ENCODE measurements at regions of chr2 and their contacts with region 1.

Region 1: GRCh38 chr2:58856100-58856499 is 615.0 kb upstream of the FANCL start:
- DNase-seq: peak; percentile 39 to 42
- H3K4me3 ChIP-seq: no peak overlapping the region
- H3K4me3 Mint-ChIP-seq: peak overlapping the region; percentile 68
- H3K27ac Mint-ChIP-seq: peak overlapping the region; percentile 59
- H3K4me1 ChIP-seq: peaks cover 11% of the 10 kb centered on the region
- H3K4me1 Mint-ChIP-seq: peaks cover 14% of the 10 kb centered on the region
- H3K27me3 ChIP-seq: no peaks in the 10 kb centered on the region
- H3K27me3 Mint-ChIP-seq: no peaks in the 10 kb centered on the region
- CTCF ChIP-seq: no peak

Region 2: DNA sequence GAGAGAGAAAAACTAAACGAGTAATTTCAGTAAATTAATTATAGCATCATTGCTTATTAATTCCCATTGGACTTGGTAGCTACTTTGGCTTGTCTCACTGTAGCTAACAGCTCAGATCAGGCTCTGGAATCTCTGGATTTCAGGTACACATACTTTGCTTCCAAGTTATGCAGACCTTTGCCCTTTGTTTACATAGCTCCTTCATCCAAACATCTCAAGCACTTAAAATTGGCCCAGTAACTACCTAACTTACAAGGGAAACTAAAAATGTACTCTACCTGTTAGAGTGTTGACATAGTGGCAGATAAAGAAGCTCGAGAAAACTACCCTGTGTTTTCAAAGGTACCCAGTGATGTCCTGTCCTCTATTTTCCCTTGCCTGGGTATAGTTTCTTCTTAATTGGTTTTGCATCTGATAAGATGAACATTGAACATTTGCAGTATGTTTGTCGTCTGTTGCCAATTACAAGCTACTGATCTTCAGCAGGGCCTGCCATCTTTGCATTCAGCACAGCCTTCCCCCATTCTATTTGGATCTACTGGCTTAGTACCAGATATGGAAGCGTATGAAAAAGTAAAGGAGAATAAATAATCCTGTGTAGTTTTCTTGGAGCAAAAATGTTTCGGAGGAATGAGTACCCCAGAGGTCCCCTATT is 13.5 kb before region 1 on chr2:
- CTCF ChIA-PET with region 1: no interaction called
- POLR2A ChIA-PET with region 1: no interaction called
- intact Hi-C with region 1: loop called (anchors 1 kb)
- DNase-seq: peak in 1 of 2 experiments; percentile 52
- H3K4me3 ChIP-seq: no peak overlapping the region
- H3K4me3 Mint-ChIP-seq: peak overlapping the region; percentile 47
- H3K27ac Mint-ChIP-seq: peak overlapping the region; percentile 37
- H3K4me1 ChIP-seq: peaks cover 22% of the 10 kb centered on the region
- H3K4me1 Mint-ChIP-seq: peaks cover 31% of the 10 kb centered on the region
- H3K27me3 ChIP-seq: no peaks in the 10 kb centered on the region
- H3K27me3 Mint-ChIP-seq: no peaks in the 10 kb centered on the region
- CTCF ChIP-seq: no peak

Region 3: DNA sequence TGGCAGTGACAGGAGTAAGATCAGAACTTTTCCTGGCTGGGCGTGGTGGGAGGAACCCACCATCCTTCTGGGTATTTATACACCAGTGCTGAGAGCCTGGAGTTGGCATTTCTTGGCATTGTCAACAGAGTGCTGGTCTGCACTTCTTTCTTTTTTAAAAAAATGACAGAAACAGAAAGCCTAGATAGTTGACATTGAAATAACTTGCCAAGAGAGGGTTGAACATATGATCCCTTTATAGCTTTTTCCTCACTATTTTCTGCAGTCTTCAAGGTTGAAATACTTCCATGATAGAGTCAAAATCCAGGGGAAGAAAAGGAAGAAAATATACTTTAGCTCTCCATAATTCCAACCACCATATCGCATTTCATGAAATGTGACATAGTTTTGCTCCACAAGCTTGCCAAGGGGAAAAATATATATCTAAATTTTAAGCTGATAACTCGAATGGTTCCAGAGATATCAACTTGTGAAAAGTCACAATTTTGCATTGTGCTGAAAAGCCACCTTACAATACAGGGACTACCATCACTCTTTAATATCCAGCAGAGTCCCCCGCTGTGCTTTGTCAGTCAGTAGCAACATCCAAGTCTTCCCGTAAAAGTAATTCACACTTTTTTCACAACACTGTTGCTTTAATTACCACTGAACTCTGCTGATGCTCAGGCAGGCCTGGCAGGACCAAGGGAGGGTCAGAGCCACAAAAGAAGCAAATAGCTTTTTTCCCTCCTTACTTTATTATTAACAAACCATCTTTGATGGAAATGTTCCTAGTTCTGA is 149.9 kb after region 1 on chr2:
- CTCF ChIA-PET with region 1: no interaction called
- POLR2A ChIA-PET with region 1: no interaction called
- intact Hi-C with region 1: no loop called
- DNase-seq: no peak
- H3K4me3 ChIP-seq: no peak overlapping the region
- H3K4me3 Mint-ChIP-seq: no peak overlapping the region
- H3K27ac Mint-ChIP-seq: no peak overlapping the region
- H3K4me1 ChIP-seq: no peaks in the 10 kb centered on the region
- H3K4me1 Mint-ChIP-seq: no peaks in the 10 kb centered on the region
- H3K27me3 ChIP-seq: no peaks in the 10 kb centered on the region
- H3K27me3 Mint-ChIP-seq: no peaks in the 10 kb centered on the region
- CTCF ChIP-seq: no peak